HCT116 (cell line): ENCODE measurements at regions of chr15 and their contacts with region 1.

Region 1: DNA sequence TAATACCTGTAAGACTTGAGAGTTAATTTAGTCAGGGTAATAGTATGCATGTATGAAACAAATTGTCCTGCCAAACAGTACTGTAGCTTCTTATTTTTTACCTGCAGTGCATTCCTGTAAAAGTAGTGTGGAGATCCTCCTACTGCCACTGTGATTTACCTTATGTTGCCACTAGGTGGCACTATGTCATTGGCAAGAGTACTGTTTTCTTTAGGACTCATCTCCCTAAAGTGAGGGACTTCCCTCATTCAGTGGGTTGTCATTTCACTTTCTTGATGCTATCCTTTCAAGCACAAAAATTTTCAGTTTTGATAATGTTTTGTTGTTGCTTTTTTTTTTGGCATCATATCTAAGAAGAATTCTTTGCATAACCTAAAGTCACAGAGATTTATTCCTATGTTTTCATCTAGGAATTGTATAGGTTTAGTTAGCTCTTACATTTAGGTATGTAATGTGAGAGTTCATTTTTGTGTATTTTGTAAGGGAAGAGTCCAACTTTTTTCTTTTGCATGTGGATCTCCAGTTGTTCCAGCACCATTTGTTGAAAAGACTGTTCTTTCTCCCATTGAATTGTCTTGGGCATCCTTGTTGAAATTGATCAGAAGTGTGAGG is 105.7 kb downstream of the AKAP13 start:
- DNase-seq: peak; percentile 50
- ATAC-seq: peak; percentile 91
- H3K4me3 ChIP-seq: no peak overlapping the region
- H3K27ac ChIP-seq: no peak overlapping the region
- H3K4me1 ChIP-seq: peaks cover 0 to 2% of the 10 kb centered on the region in 2 experiments; a peak in 1 of 4 replicates
- H3K27me3 ChIP-seq: no peaks in the 10 kb centered on the region
- CTCF ChIP-seq: peak; percentile 65 to 71 (median 68)
- POLR2A ChIP-seq: no peak
- RAD21 ChIP-seq: peak; percentile 75

Region 2: GRCh38 chr15:85044251-85044853 is 441.7 kb before region 1 on chr15:
- CTCF ChIA-PET with region 1: no interaction called
- POLR2A ChIA-PET with region 1: no interaction called
- RAD21 ChIA-PET with region 1: no interaction called
- intact Hi-C with region 1: no loop called
- DNase-seq: peak; percentile 28
- ATAC-seq: peak; percentile 93
- H3K4me3 ChIP-seq: no peak overlapping the region
- H3K27ac ChIP-seq: no peak overlapping the region
- H3K4me1 ChIP-seq: 0 out of 4 replicates have a peak, but pooled peaks cover 0 to 3% of the 10 kb centered on the region in 2 experiments
- H3K27me3 ChIP-seq: no peaks in the 10 kb centered on the region
- CTCF ChIP-seq: peak; percentile 49 to 61 (median 57); a peak in 5 of 6 replicates
- POLR2A ChIP-seq: no peak
- RAD21 ChIP-seq: peak; percentile 79

Region 3: GRCh38 chr15:85831415-85832113 is 345.5 kb after region 1 on chr15:
- CTCF ChIA-PET with region 1: no interaction called
- POLR2A ChIA-PET with region 1: no interaction called
- RAD21 ChIA-PET with region 1: no interaction called
- intact Hi-C with region 1: loop called (anchors 10 kb)
- DNase-seq: peak; percentile 37
- ATAC-seq: peak; percentile 99
- H3K4me3 ChIP-seq: no peak overlapping the region
- H3K27ac ChIP-seq: no peak overlapping the region
- H3K4me1 ChIP-seq: no peaks in the 10 kb centered on the region
- H3K27me3 ChIP-seq: no peaks in the 10 kb centered on the region
- CTCF ChIP-seq: peak; percentile 70 to 87 (median 76)
- POLR2A ChIP-seq: no peak
- RAD21 ChIP-seq: peak; percentile 83